Endothelial cell of umbilical vein (primary cell): ENCODE measurements at regions of chr10 and their contacts with region 1.

Region 1: DNA sequence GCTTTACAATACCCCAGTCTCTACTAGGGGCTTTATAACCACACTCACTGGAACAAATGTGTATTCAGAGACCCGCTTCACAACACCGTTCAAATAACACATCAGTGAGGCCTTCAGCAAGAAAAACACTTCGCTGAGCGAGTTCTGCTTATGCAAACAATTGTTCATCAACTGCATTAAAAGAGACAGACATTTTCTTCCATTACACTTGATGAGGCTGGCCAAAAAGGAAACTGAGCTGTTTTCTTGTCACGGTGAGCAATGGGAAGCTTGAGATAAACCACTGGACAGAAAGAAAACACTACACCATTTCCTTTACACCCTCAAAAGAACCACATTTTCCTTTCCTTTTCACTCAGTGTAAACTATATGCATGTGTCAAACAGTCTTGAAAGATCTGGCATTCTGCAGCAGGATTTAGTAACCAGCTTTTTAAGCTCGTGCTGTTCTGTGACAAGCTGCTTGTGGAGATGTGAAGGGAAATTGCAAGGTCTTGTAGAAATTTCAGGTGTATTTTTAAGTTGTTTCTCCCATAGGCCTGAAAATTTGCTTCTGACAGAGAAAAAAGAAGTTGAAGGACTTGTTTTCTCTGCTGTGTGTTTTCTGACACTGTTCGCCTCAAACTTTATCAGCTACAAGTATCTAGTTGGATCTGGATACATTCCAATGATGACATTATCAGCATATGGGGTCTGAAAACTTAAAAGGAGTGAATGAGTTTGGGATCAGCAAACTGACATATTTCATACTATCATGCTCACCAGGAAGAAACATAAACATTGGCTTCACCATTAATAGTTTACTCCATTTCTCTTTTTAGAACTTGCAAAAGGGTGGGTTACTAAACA is 693.1 kb downstream of the PARD3 start:
- DNase-seq: peak; percentile 98
- H3K4me3 ChIP-seq: peak overlapping the region in 1 of 3 experiments; percentile 10
- H3K27ac ChIP-seq: peak overlapping the region; percentile 67
- H3K4me1 ChIP-seq: peaks cover 39% of the 10 kb centered on the region
- H3K27me3 ChIP-seq: no peaks in the 10 kb centered on the region
- CTCF ChIP-seq: no peak
- POLR2A ChIP-seq: no peak

Region 2: DNA sequence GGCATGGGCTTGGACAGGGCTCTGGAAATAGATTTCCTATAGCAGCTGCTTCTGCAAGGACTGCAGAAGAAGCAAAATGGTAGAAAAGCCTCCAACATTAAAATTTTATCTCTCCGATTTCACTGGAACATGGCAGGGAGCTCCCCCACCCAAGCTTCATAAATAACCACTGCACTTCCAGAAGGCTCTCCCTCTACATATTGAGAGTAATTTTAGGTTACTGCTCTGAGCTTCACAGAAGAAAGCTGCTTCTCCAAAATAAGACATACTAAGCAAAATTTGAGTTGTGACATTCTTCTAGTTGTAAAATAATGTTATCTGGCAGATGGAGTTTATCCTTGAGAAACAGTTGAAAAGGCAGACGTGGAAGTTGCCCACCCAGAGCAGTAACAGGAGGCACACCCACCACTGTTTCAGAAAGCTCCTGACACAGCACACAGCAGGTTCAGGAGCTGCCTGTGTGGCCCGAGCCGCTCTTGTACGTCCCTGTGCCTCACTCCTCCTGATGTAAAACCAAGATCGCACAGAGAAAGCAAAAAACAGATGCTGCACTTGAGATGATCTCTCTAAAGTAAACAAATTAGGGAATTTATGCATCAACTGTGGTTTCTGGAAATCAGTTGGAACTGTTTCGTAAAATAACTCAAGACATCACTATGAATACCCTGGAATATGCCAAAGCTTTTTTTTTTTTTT is 72.1 kb after region 1 on chr10:
- CTCF ChIA-PET with region 1: no interaction called
- POLR2A ChIA-PET with region 1: no interaction called
- dilution Hi-C with region 1: no loop called
- intact Hi-C with region 1: loop called (anchors 5 kb)
- DNase-seq: no peak
- H3K4me3 ChIP-seq: no peak overlapping the region
- H3K27ac ChIP-seq: no peak overlapping the region
- H3K4me1 ChIP-seq: no peaks in the 10 kb centered on the region
- H3K27me3 ChIP-seq: no peaks in the 10 kb centered on the region
- CTCF ChIP-seq: no peak
- POLR2A ChIP-seq: no peak